ENCODE measurements at regions of chr15 and their contacts with region 1.

Region 1: GRCh38 chr15:41557673-41558399 is 1.2 kb upstream of the TYRO3 start:
- DNase-seq: peak in 1 of 2 donors; percentile 64
- ATAC-seq: peak; percentile 53 to 81 (median 75)
- H3K4me3 ChIP-seq: peak overlapping the region in 8 of 10 donors; percentile 44 to 74 (median 58)
- H3K27ac ChIP-seq: peak overlapping the region in 4 of 10 donors; percentile 7 to 78 (median 44)
- H3K4me1 ChIP-seq: peaks cover 6 to 58% (median 29%) of the 10 kb centered on the region in 9 donors
- H3K27me3 ChIP-seq: peaks cover 0 to 16% (median 0%) of the 10 kb centered on the region in 7 donors
- CTCF ChIP-seq: peak; percentile 60 to 94 (median 84)

Region 2: GRCh38 chr15:41493205-41493901 is 64.5 kb before region 1 on chr15 and contains the start of gene ITPKA:
- intact Hi-C with region 1: loop called in 1 of 10 experiments (anchors 10 kb)
- DNase-seq: peak; percentile 61 to 73
- ATAC-seq: peak; percentile 74 to 88 (median 81)
- H3K4me3 ChIP-seq: peak within 1 kb of the TSS; percentile 48 to 91 (median 70)
- H3K27ac ChIP-seq: peak within 1 kb of the TSS in 7 of 10 donors; percentile 21 to 70 (median 55)
- H3K4me1 ChIP-seq: peaks cover 7 to 41% (median 34%) of the 10 kb centered on the region in 9 donors
- H3K27me3 ChIP-seq: peaks cover 7 to 77% (median 56%) of the 10 kb centered on the region in 7 donors
- CTCF ChIP-seq: peak in 1 of 9 donors; percentile 7
- total RNA-seq, gene ITPKA: 0.55 to 6.8 (median 1.5) TPM

Region 3: GRCh38 chr15:41585127-41586047 is 27.6 kb after region 1 on chr15:
- intact Hi-C with region 1: loop called in 1 of 10 experiments (anchors 2 kb)
- DNase-seq: peak; percentile 27 to 55
- ATAC-seq: peak; percentile 82 to 90 (median 86)
- H3K4me3 ChIP-seq: peak overlapping the region in 9 of 10 donors; percentile 34 to 61 (median 54)
- H3K27ac ChIP-seq: peak overlapping the region in 9 of 10 donors; percentile 25 to 69 (median 50)
- H3K4me1 ChIP-seq: peaks cover 0 to 11% (median 5%) of the 10 kb centered on the region in 9 donors
- H3K27me3 ChIP-seq: peaks cover 0 to 17% (median 0%) of the 10 kb centered on the region in 7 donors
- CTCF ChIP-seq: peak; percentile 16 to 57 (median 36)

Measured in heart right ventricle (tissue), 16 donors.